OCI-LY7 (cell line): ENCODE measurements at regions of chr20 and their contacts with region 1.

Region 1: DNA sequence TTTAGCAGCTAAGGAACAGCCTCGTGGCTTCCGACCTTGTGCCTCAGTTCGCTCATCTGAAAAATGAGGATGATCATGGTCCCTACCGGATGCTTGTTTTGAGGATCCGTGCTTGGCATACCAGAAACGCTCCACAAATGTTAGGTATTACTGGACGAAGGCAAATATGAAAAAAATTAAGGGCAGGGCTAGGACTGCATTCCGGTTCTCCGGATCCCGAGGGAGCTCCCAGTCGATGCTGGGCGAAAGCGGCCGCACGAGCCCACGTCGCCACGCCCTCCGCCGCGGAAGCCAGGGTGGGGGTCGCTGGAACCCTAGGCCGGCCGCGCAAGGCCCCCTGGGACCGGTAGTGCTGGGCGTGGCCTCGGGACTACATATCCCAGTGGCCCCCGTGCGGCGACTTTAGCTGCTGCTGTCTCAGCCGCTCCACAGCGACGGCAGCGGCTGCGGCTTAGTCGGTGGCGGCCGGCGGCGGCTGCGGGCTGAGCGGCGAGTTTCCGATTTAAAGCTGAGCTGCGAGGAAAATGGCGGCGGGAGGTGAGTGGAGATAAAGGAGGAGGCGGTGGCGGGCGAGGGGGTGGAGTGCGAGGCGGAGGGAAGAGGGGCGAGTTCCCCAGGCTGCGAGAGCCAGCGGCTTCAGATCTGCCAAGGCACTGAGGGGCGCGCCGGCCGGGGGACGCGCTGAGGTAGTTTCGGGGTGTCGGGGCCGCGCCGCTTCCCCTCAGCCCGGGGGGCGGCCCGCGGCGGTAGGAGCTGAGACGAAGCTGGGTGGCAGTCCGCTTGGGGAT is at the start of gene NCOA3:
- DNase-seq: peak; percentile 98
- H3K4me3 ChIP-seq: peak within 1 kb of the TSS; percentile 82
- H3K27ac ChIP-seq: peak within 1 kb of the TSS; percentile 80
- H3K4me1 ChIP-seq: peaks cover 49% of the 10 kb centered on the region
- CTCF ChIP-seq: peak; percentile 45
- total RNA-seq, gene NCOA3: 45.4 and 50.5 TPM in 2 replicates

Region 2: DNA sequence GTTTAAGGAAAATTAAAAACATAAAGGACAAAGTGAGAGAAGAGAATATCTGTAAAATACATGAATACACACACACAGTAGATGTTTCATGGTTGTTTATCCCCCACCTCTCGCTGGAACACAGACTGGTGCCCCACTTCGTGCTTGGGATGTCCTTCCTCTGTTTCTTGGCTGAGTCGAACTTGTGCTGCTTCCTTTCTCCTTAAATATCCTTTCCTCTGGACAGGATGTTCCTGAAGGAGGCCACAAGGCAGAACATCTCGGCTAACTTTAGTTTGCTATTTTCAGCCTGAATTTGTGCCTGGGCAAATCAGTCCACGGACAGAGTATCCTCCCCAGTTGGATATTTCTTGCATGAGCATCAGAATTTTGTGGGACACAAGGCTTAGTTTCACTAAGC is 90.5 kb before region 1 on chr20:
- CTCF ChIA-PET with region 1: no interaction called
- POLR2A ChIA-PET with region 1: interaction called, 16 read pairs
- intact Hi-C with region 1: loop called (anchors 1 kb)
- DNase-seq: no peak
- H3K4me3 ChIP-seq: peak overlapping the region; percentile 75
- H3K27ac ChIP-seq: peak overlapping the region; percentile 99
- H3K4me1 ChIP-seq: peaks cover 83% of the 10 kb centered on the region
- CTCF ChIP-seq: no peak

Region 3: GRCh38 chr20:47438577-47439381 is 62.9 kb before region 1 on chr20:
- CTCF ChIA-PET with region 1: no interaction called
- POLR2A ChIA-PET with region 1: interaction called, 12 read pairs
- intact Hi-C with region 1: loop called (anchors 5 kb)
- DNase-seq: peak; percentile 85
- H3K4me3 ChIP-seq: peak overlapping the region; percentile 60
- H3K27ac ChIP-seq: peak overlapping the region; percentile 84
- H3K4me1 ChIP-seq: peaks cover 69% of the 10 kb centered on the region
- CTCF ChIP-seq: no peak

Region 4: GRCh38 chr20:47468290-47469050 is 33.2 kb before region 1 on chr20:
- CTCF ChIA-PET with region 1: no interaction called
- POLR2A ChIA-PET with region 1: interaction called, 22 read pairs
- intact Hi-C with region 1: no loop called
- DNase-seq: peak; percentile 94
- H3K4me3 ChIP-seq: peak overlapping the region; percentile 37
- H3K27ac ChIP-seq: peak overlapping the region; percentile 95
- H3K4me1 ChIP-seq: peaks cover 90% of the 10 kb centered on the region
- CTCF ChIP-seq: no peak

Region 5: DNA sequence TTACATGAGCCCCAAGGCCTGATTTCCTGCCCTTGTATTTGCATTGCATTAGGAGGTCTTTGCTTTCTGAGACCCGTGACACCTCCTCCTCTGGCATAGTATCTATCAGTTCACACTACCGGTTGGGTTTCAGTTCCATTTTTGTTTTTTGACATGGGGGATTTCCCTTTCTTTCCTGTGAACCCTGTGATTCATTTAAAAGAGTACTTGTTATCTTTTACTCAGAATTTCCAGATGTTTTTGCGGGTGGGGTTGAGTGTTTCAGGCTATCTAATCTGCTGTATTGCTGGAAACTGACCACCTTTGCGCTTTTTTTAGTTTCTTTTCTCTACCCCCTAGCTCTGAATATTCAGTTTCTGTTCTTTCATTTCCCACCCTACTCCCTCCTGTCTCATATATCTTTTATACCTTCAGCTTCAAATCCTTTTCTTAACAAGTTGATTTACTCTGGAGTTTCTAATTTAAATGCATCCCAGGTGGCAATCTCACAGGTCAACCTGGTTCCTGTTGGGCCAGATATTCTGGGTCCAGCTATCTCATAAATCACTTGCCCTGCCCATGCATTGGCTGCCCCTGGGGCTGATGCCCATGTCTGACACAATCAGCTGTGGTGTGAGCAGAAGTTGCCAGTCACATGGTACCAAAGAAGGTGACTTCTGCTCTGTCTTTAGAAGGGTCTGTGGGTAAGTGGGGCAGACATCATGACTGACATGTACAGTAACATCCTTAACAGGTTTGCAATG is 14.3 kb before region 1 on chr20:
- CTCF ChIA-PET with region 1: interaction called, 3 read pairs
- POLR2A ChIA-PET with region 1: interaction called, 47 read pairs
- intact Hi-C with region 1: loop called (anchors 1 kb)
- DNase-seq: peak; percentile 96
- H3K4me3 ChIP-seq: peak overlapping the region; percentile 55
- H3K27ac ChIP-seq: peak overlapping the region; percentile 98
- H3K4me1 ChIP-seq: peaks cover 97% of the 10 kb centered on the region
- CTCF ChIP-seq: no peak

Region 6: GRCh38 chr20:47620808-47621805 is 119.4 kb after region 1 on chr20:
- CTCF ChIA-PET with region 1: interaction called, 3 read pairs
- POLR2A ChIA-PET with region 1: interaction called, 3 read pairs
- intact Hi-C with region 1: loop called (anchors 2 kb)
- DNase-seq: peak; percentile 79
- H3K4me3 ChIP-seq: no peak overlapping the region
- H3K27ac ChIP-seq: peak overlapping the region; percentile 51
- H3K4me1 ChIP-seq: peaks cover 35% of the 10 kb centered on the region
- CTCF ChIP-seq: peak; percentile 100